CD4-positive, alpha-beta memory T cell (primary cell): ENCODE measurements at regions of chr11 and their contacts with region 1.

Region 1: GRCh38 chr11:35822815-35823495 is 120.9 kb upstream of the LDLRAD3 start:
- DNase-seq: no peak
- H3K4me3 ChIP-seq: no peak overlapping the region
- H3K4me3 Mint-ChIP-seq: peak overlapping the region in 2 of 8 donors; percentile 7 to 8
- H3K27ac ChIP-seq: no peak overlapping the region
- H3K27ac Mint-ChIP-seq: no peak overlapping the region
- H3K4me1 ChIP-seq: peaks cover 9% of the 10 kb centered on the region
- H3K4me1 Mint-ChIP-seq: peaks cover 7 to 18% (median 14%) of the 10 kb centered on the region in 4 donors
- H3K27me3 ChIP-seq: no peaks in the 10 kb centered on the region
- H3K27me3 Mint-ChIP-seq: peaks cover 0 to 2% of the 10 kb centered on the region in 2 donors

Region 2: DNA sequence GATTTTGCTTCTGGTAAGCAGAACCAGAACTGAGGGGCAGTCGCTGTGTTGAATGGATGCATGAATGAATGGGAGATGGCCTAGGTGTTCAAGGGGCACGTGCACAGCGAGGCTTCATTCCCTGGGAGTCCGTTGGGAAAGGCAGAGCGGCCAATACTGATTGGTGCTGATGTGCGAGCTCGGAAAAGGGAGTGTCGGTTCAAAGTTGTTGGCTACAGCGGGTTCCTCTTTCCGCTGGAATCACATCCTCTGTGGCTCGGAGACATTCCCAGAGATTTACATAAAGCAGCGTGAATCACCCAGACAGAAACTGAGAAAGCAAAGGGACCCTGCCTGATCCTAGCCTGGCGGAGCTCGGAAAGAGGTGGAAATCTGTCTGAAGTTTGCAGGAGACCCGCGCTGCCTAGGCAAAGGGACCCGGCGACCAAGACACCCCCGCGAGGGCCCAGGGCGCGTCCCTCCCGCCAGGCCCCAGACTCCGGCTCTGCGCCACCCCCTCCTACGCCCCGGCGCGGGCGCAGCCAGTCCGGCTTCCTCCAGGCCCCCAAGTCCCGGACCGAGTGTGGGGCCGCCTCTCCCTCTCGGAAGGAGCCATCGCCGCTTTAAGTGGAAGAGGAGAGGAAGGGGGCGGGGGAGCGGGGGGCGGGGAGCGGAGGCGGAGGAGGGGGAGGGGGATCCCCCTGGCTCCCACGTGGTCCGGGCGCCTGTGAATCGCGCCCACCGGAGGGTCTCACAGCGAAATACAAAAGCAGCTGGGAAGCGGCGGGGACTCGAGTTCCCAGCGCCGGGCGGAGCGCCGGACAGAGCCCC is 205.1 kb before region 1 on chr11 and contains the start of gene FJX1:
- CTCF ChIA-PET with region 1: interaction called, 21 read pairs
- POLR2A ChIA-PET with region 1: no interaction called
- intact Hi-C with region 1: loop called (anchors 1 kb)
- DNase-seq: peak in 2 of 5 donors; percentile 5 to 12
- H3K4me3 ChIP-seq: no peak within 1 kb of the TSS
- H3K4me3 Mint-ChIP-seq: peak within 1 kb of the TSS; percentile 61 to 86 (median 79)
- H3K27ac ChIP-seq: no peak within 1 kb of the TSS
- H3K27ac Mint-ChIP-seq: no peak within 1 kb of the TSS
- H3K4me1 ChIP-seq: peaks cover 15% of the 10 kb centered on the region
- H3K4me1 Mint-ChIP-seq: peaks cover 6 to 29% (median 11%) of the 10 kb centered on the region in 4 donors
- H3K27me3 ChIP-seq: peaks cover 27% of the 10 kb centered on the region
- H3K27me3 Mint-ChIP-seq: peaks cover 43 to 49% of the 10 kb centered on the region in 2 donors
- total RNA-seq, gene FJX1: not detected

Region 3: DNA sequence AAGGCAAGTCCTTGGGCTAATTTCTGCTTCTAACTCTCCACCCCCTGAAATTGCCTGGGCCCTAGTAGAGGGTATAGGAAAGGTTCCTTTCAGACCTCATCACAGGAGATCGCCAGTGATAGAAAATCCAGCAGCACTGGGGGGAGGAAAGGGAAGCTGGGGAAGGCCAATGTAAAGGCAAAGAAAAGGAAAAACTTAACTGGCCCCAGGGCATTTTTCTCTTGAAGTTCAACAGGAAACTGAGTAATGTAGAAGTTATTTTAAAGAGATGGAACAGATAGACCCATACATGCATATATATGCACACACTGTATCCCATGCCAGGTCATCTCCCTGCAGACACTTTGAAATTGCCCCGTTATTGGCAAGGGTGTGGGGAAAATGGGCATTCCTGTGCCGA is 26.4 kb before region 1 on chr11:
- CTCF ChIA-PET with region 1: interaction called, 16 read pairs
- POLR2A ChIA-PET with region 1: no interaction called
- intact Hi-C with region 1: no loop called
- DNase-seq: no peak
- H3K4me3 ChIP-seq: no peak overlapping the region
- H3K4me3 Mint-ChIP-seq: no peak overlapping the region
- H3K27ac ChIP-seq: no peak overlapping the region
- H3K27ac Mint-ChIP-seq: no peak overlapping the region
- H3K4me1 ChIP-seq: no peaks in the 10 kb centered on the region
- H3K4me1 Mint-ChIP-seq: peaks cover 11 to 37% (median 17%) of the 10 kb centered on the region in 4 donors
- H3K27me3 ChIP-seq: no peaks in the 10 kb centered on the region
- H3K27me3 Mint-ChIP-seq: no peaks in the 10 kb centered on the region

Region 4: DNA sequence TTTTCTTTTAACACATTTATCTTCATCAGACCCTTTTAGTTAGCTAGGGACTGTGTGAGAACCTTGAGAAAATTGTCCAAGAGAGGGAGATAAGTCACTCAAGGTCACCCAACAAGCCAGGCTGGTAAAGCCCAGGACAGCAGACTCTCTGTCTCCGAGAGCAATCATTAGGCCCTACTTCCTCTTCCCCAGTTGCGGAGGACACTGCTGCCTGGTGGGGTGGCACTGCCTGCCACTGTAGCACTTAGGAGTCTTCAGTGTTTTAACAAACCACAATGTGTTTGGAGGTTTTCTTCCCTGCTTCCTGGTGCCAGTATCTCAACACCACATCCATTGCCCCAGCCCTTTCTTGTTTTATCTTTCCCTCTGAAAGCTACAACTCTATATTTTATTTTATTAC is 11.2 kb before region 1 on chr11:
- CTCF ChIA-PET with region 1: interaction called, 39 read pairs
- POLR2A ChIA-PET with region 1: no interaction called
- intact Hi-C with region 1: no loop called
- DNase-seq: no peak
- H3K4me3 ChIP-seq: no peak overlapping the region
- H3K4me3 Mint-ChIP-seq: no peak overlapping the region
- H3K27ac ChIP-seq: no peak overlapping the region
- H3K27ac Mint-ChIP-seq: no peak overlapping the region
- H3K4me1 ChIP-seq: no peaks in the 10 kb centered on the region
- H3K4me1 Mint-ChIP-seq: no peaks in the 10 kb centered on the region
- H3K27me3 ChIP-seq: no peaks in the 10 kb centered on the region
- H3K27me3 Mint-ChIP-seq: no peaks in the 10 kb centered on the region

Region 5: GRCh38 chr11:35852056-35852455 is 29.1 kb after region 1 on chr11:
- CTCF ChIA-PET with region 1: interaction called, 13 read pairs
- POLR2A ChIA-PET with region 1: no interaction called
- intact Hi-C with region 1: no loop called
- DNase-seq: no peak
- H3K4me3 ChIP-seq: no peak overlapping the region
- H3K4me3 Mint-ChIP-seq: no peak overlapping the region
- H3K27ac ChIP-seq: no peak overlapping the region
- H3K27ac Mint-ChIP-seq: no peak overlapping the region
- H3K4me1 ChIP-seq: no peaks in the 10 kb centered on the region
- H3K4me1 Mint-ChIP-seq: no peaks in the 10 kb centered on the region
- H3K27me3 ChIP-seq: no peaks in the 10 kb centered on the region
- H3K27me3 Mint-ChIP-seq: peaks cover 2 to 4% of the 10 kb centered on the region in 2 donors

Region 6: GRCh38 chr11:36492724-36493304 is 669.9 kb after region 1 on chr11:
- CTCF ChIA-PET with region 1: interaction called, 13 read pairs
- POLR2A ChIA-PET with region 1: no interaction called
- intact Hi-C with region 1: loop called (anchors 5 kb)
- DNase-seq: peak in 4 of 5 donors; percentile 42 to 54 (median 46)
- H3K4me3 ChIP-seq: no peak overlapping the region
- H3K4me3 Mint-ChIP-seq: no peak overlapping the region
- H3K27ac ChIP-seq: no peak overlapping the region
- H3K27ac Mint-ChIP-seq: peak overlapping the region in 5 of 7 donors; percentile 18 to 76 (median 26)
- H3K4me1 ChIP-seq: peaks cover 13% of the 10 kb centered on the region
- H3K4me1 Mint-ChIP-seq: peaks cover 13 to 31% (median 17%) of the 10 kb centered on the region in 4 donors
- H3K27me3 ChIP-seq: no peaks in the 10 kb centered on the region
- H3K27me3 Mint-ChIP-seq: no peaks in the 10 kb centered on the region